Activated CD8-positive, alpha-beta T cell treated with anti-CD3 and anti-CD28 coated beads for 36 hours (primary cell): ENCODE measurements at regions of chr1 and their contacts with region 1.

Region 1: GRCh38 chr1:18902523-18903290 is at the start of gene ALDH4A1:
- DNase-seq: peak; percentile 96
- ATAC-seq: peak; percentile 98
- H3K4me3 Mint-ChIP-seq: peak within 1 kb of the TSS; percentile 87
- H3K27ac Mint-ChIP-seq: peak within 1 kb of the TSS; percentile 98
- H3K4me1 Mint-ChIP-seq: peaks cover 22% of the 10 kb centered on the region
- H3K27me3 Mint-ChIP-seq: no peaks in the 10 kb centered on the region
- CTCF ChIP-seq: no peak
- total RNA-seq, gene ALDH4A1: 3.9 to 4.3 TPM

Region 2: DNA sequence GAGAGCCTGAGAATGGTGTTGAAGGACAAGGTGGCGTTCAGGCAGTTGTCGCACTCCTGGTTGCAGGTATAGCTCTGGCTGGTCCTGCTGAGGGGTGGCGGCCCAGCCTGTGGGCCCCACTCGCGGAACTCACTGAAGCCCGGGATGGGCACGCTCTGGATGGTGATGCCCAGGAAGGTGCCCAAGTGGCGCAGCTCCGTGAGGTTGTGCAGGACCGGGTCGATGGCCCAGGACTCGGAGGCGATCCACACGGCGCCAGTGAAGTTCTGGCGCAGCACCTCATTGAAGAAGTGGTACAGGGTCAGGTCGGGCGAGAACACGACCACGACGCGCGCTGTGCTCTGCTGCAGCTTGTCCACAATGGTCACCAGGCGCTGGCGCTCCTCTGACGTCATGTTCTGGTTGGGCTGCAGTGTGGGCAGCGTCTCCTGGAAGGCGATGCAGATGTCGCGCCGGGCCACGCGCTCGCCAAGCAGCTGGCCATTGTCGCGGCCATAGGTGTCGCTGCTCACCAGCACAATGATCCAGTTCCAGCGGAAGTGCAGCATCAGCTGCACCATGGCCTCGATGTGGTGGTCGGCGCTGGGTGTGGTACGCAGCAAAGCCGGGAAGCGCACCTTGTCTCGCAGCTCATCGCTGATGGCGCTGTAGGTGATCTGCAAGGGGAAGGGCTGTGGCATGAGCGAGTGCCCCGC is 48.2 kb before region 1 on chr1:
- CTCF ChIA-PET with region 1: no interaction called
- POLR2A ChIA-PET with region 1: no interaction called
- intact Hi-C with region 1: no loop called
- DNase-seq: no peak
- ATAC-seq: no peak
- H3K4me3 Mint-ChIP-seq: no peak overlapping the region
- H3K27ac Mint-ChIP-seq: no peak overlapping the region
- H3K4me1 Mint-ChIP-seq: no peaks in the 10 kb centered on the region
- H3K27me3 Mint-ChIP-seq: no peaks in the 10 kb centered on the region
- CTCF ChIP-seq: no peak

Region 3: GRCh38 chr1:18866314-18866713 is 36.4 kb before region 1 on chr1:
- CTCF ChIA-PET with region 1: no interaction called
- POLR2A ChIA-PET with region 1: no interaction called
- intact Hi-C with region 1: no loop called
- DNase-seq: no peak
- ATAC-seq: no peak
- H3K4me3 Mint-ChIP-seq: no peak overlapping the region
- H3K27ac Mint-ChIP-seq: no peak overlapping the region
- H3K4me1 Mint-ChIP-seq: no peaks in the 10 kb centered on the region
- H3K27me3 Mint-ChIP-seq: peaks cover 9% of the 10 kb centered on the region
- CTCF ChIP-seq: no peak

Region 4: GRCh38 chr1:18883636-18884418 is 18.9 kb before region 1 on chr1:
- CTCF ChIA-PET with region 1: interaction called, 32 read pairs
- POLR2A ChIA-PET with region 1: interaction called, 3 read pairs
- intact Hi-C with region 1: no loop called
- DNase-seq: peak; percentile 86
- ATAC-seq: peak; percentile 95
- H3K4me3 Mint-ChIP-seq: no peak overlapping the region
- H3K27ac Mint-ChIP-seq: no peak overlapping the region
- H3K4me1 Mint-ChIP-seq: no peaks in the 10 kb centered on the region
- H3K27me3 Mint-ChIP-seq: no peaks in the 10 kb centered on the region
- CTCF ChIP-seq: peak; percentile 90

Region 5: DNA sequence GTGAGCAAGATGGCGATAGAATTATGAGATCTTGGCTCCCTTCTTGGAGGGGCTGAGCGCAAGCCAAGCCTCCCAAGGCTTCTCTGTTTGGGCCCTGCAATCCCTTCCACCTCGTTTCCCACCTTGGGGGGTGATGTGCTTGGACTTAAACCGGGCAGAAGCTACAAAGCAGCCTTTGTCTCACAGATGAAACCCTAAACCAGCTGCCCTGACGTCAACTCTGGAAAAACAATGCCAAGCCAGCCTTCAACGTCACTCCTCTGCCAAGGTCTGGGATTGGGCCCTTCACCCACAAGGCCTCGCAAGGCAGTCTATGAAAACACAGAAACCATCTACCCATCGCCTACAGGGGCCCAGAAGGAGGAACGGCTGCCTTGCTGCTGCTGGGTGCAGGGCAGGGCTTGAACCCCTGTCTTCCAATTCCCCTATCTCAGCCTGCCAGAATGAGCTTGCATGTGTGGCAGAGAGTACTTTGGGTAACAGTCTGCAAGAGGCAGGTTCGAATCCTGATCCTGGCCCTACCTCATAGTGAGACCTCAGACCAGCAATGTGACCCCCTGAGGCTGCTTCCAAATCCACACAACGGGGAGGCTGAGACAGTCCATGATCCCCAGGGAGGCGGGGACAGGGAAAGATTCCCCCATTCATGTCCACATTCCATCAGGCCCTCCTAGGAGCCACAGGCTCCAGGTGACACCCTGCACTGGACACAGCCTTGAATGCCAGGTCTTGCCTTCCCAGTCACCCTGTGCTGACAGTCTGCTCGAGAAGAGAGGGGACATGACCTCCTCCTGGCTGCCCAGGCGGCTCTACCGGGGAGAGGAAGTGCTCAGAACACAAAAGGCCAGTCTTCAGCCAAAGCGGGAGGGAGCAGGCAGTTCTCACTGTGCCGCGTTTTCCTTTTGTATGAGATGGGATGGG is 38.8 kb after region 1 on chr1:
- CTCF ChIA-PET with region 1: interaction called, 26 read pairs
- POLR2A ChIA-PET with region 1: no interaction called
- intact Hi-C with region 1: no loop called
- DNase-seq: no peak
- ATAC-seq: no peak
- H3K4me3 Mint-ChIP-seq: no peak overlapping the region
- H3K27ac Mint-ChIP-seq: no peak overlapping the region
- H3K4me1 Mint-ChIP-seq: peaks cover 56% of the 10 kb centered on the region
- H3K27me3 Mint-ChIP-seq: no peaks in the 10 kb centered on the region
- CTCF ChIP-seq: no peak

Region 6: GRCh38 chr1:18965206-18966173 is 62.8 kb after region 1 on chr1:
- CTCF ChIA-PET with region 1: interaction called, 11 read pairs
- POLR2A ChIA-PET with region 1: interaction called, 3 read pairs
- intact Hi-C with region 1: no loop called
- DNase-seq: peak; percentile 71
- ATAC-seq: peak; percentile 84
- H3K4me3 Mint-ChIP-seq: no peak overlapping the region
- H3K27ac Mint-ChIP-seq: peak overlapping the region; percentile 78
- H3K4me1 Mint-ChIP-seq: peaks cover 16% of the 10 kb centered on the region
- H3K27me3 Mint-ChIP-seq: no peaks in the 10 kb centered on the region
- CTCF ChIP-seq: no peak

Region 7: DNA sequence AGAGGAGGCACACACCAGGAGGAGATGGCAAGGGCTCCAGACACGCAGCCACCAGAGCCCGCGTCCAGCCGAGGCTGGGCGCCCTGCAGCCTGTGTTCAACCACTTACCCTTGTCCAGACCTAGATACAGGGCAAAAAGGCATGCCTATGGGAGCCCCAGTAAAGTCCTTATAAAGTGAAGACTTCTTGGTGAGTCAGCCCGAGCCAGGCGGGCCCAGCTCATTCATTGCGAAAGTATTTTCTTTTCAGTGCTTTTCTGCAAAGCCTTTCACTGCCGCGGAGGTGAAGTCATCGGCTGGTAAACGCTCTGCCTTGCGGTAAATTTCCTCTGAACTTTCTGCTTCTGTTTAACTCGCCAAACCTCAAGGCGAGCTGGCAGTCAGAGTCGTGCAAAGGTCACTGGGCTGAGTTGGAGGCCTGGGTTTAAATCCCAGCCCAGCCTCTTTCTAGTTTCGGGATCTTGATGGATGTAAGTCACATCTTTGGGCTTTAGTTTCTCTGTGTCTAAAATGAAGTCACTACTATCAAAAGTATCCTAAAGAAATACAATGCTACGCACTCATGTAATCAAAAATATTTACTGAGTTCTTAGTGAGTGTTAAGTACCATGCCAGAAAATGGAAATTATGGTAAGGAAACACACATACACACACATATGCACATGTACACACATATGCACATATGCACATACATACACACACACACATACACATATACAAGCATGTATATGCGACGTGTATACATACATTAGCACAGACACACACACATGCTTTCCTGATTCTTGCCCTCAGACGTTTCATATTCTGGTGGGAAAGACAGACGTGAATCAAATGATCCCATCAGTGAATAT is 108.5 kb after region 1 on chr1:
- CTCF ChIA-PET with region 1: interaction called, 14 read pairs
- POLR2A ChIA-PET with region 1: interaction called, 3 read pairs
- intact Hi-C with region 1: no loop called
- DNase-seq: peak; percentile 95
- ATAC-seq: peak; percentile 97
- H3K4me3 Mint-ChIP-seq: no peak overlapping the region
- H3K27ac Mint-ChIP-seq: peak overlapping the region; percentile 81
- H3K4me1 Mint-ChIP-seq: peaks cover 34% of the 10 kb centered on the region
- H3K27me3 Mint-ChIP-seq: no peaks in the 10 kb centered on the region
- CTCF ChIP-seq: no peak

Region 8: DNA sequence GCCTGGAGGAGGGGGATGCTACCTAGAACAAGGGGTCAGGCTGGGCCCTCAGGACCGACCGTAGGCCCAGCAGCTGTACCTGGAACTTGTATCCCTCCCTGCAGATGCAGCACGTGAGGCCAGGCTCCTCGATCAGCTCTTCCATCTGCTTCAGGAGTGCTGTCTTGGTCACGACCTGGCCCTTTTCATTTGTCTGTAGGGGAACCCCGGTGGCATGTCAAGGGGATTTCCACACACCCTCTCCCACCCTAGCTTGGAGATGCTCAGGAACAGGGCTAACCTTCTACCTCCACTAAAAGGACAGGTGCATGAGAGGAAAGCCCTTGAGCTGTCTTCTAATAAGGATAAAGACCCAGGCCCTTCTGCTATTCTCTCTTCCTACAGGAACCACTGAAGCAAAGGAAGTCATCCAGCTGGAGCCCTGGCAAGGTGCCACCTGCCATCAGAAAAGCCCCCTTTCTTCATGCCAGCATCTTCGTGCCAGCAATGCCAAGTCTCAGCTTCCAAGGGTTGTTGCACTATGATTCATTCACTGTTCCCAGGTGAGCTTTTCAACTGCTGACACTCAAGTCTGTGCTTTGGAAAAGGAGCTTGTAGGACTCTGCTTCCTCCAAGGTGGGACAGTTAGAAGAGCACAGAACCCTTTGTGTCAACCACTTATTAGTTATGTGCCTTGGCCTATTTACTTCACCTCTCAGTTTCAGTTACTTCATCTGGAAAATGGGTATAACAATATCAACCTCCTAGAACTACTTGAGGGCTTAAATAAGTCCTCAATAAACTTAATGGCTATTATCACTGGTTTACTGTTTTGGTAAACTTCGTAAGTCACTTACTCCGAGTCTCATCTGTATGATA is 185.3 kb after region 1 on chr1:
- CTCF ChIA-PET with region 1: interaction called, 10 read pairs
- POLR2A ChIA-PET with region 1: no interaction called
- intact Hi-C with region 1: no loop called
- DNase-seq: peak; percentile 44
- ATAC-seq: peak; percentile 73
- H3K4me3 Mint-ChIP-seq: no peak overlapping the region
- H3K27ac Mint-ChIP-seq: peak overlapping the region; percentile 65
- H3K4me1 Mint-ChIP-seq: peaks cover 18% of the 10 kb centered on the region
- H3K27me3 Mint-ChIP-seq: no peaks in the 10 kb centered on the region
- CTCF ChIP-seq: no peak

Region 9: DNA sequence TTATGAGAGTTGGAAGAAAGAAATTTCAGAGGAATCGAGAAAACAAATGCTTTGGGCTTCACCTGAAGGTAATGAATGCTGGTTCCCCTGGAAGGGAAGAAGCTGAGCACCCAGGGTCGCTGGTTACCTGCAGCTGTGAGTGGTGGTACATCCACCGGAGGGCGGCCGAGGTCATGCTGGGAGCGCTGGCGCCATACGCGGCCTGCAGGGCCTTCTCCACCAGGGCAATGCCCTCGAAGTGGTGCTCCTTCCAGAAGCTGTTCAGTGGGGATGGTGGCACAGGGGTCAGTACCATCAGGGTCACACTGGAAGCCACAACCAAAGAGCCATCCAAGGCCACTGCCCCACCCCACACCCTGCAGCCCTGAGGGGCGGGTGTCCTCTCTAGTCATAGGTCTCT is 365.7 kb after region 1 on chr1:
- CTCF ChIA-PET with region 1: no interaction called
- POLR2A ChIA-PET with region 1: no interaction called
- intact Hi-C with region 1: no loop called
- DNase-seq: no peak
- ATAC-seq: no peak
- H3K4me3 Mint-ChIP-seq: no peak overlapping the region
- H3K27ac Mint-ChIP-seq: no peak overlapping the region
- H3K4me1 Mint-ChIP-seq: peaks cover 2% of the 10 kb centered on the region
- H3K27me3 Mint-ChIP-seq: peaks cover 9% of the 10 kb centered on the region
- CTCF ChIP-seq: no peak